AG04450 (cell line): ENCODE measurements at regions of chr7 and their contacts with region 1.

Region 1: GRCh38 chr7:31122649-31123058 is 70.5 kb downstream of the ADCYAP1R1 start:
- DNase-seq: peak; percentile 81
- H3K4me3 ChIP-seq: no peak overlapping the region
- H3K27ac ChIP-seq: no peak overlapping the region
- H3K27me3 ChIP-seq: no peaks in the 10 kb centered on the region
- CTCF ChIP-seq: peak; percentile 82

Region 2: GRCh38 chr7:30787486-30787885 is 335.2 kb before region 1 on chr7:
- CTCF ChIA-PET with region 1: interaction called, 10 read pairs
- POLR2A ChIA-PET with region 1: no interaction called
- DNase-seq: no peak
- H3K4me3 ChIP-seq: no peak overlapping the region
- H3K27ac ChIP-seq: no peak overlapping the region
- H3K27me3 ChIP-seq: no peaks in the 10 kb centered on the region
- CTCF ChIP-seq: no peak

Region 3: DNA sequence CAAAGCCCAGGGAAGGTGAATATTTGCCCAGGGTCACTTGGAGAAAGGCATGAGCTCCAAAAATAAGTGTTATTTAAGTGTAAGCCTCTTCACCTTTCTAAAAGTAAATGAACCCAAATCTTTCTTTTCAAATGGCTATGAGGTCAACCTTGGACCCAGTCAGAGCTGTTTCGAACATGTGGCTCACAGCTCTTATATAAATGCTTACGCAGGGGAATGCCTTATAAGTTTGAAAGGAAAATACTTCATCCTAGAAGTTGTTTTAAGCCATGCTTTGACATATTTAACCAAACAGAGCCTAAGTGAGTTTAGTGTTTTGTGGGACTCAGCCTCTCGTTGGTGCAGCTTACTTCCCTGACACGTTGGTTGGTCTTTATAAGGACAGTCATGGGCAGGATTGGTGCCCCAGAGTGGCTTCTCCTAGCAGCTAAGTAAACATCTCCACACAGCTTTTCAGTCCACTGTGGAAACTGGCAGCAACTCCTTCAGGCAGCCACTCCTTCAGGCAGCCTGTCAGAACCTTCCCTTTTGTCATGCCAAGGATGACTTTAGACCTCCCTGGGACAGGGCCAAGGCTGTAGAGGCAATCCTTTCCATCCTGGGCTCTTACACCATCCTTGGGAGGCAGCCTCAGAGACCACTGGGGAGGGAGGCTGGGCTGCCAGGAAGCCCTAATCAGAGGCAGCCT is 307.8 kb before region 1 on chr7:
- CTCF ChIA-PET with region 1: interaction called, 12 read pairs
- POLR2A ChIA-PET with region 1: no interaction called
- DNase-seq: no peak
- H3K4me3 ChIP-seq: no peak overlapping the region
- H3K27ac ChIP-seq: no peak overlapping the region
- H3K27me3 ChIP-seq: no peaks in the 10 kb centered on the region
- CTCF ChIP-seq: no peak

Region 4: DNA sequence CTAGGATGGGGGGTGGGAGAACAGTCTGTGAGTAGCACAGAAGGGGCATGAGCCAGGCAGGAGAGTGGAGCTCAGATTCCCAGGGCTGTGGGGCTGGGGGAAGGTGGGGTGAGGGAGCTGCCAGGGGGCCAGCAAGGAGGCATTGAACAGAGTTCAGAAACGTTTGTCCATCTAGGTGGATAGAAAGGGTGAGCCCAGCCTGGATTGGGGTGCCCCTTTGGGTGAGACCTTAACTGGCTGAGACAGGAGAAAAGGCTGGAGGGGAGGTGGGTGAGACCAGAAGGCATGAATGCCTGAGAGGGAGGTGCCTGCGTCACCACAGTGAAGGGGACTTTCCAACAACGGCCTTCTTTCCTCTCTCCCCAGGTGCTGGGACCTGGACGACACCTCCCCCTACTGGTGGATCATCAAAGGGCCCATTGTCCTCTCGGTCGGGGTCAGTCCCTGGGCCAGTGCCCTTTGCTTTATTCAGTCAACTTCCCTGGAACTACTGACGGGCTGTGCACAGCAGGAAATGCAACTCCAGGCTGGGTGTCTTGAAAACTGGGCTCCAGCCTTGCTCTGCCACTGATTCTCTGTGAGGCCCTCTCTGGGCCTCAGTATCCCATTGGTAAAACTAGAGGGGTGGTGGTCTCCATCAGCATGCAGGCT is 147.9 kb before region 1 on chr7:
- CTCF ChIA-PET with region 1: interaction called, 12 read pairs
- POLR2A ChIA-PET with region 1: no interaction called
- DNase-seq: no peak
- H3K4me3 ChIP-seq: no peak overlapping the region
- H3K27ac ChIP-seq: no peak overlapping the region
- H3K27me3 ChIP-seq: peaks cover 30% of the 10 kb centered on the region
- CTCF ChIP-seq: peak; percentile 56

Region 5: DNA sequence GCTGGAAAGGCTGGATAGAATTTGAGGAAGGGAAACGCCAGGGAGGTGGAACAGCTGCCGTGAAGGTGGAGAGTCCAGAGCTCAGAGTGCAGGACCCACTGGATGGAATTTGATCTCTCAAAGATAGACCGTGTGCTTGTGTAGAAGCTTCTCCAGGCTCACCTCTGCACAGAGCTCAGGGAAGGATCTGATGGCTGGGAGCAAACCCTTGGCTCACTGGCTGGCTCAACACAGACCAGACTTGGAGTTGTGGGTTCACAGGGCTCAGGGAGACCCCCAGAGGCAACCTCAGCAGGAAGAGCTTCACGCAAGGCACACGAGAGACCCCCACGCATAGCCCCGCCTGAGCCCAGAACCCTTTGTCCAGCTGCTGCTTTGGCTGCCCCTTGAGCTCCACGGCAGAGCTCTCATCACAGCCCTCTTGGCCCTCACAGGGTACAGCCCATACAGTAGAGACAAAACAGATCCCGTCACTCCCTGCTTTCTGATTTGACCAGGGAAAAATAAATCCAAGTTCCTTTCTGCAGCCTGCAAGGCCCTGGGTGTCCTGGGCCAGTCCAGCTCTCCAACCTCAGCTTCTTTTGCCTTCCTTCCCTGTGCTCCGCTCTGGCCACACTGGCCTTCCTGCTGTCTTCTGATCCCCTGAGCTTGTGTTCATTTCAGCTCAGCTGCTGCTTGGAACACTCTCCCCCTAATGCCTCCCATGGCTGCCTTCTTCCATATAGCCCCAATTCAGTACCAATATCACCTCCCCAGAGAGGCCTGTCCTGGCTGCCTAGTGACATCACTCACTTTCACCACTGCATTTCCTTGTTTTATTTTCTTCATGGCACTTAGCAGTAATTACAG is 132.6 kb before region 1 on chr7:
- CTCF ChIA-PET with region 1: interaction called, 338 read pairs
- POLR2A ChIA-PET with region 1: no interaction called
- DNase-seq: no peak
- H3K4me3 ChIP-seq: no peak overlapping the region
- H3K27ac ChIP-seq: no peak overlapping the region
- H3K27me3 ChIP-seq: peaks cover 3% of the 10 kb centered on the region
- CTCF ChIP-seq: no peak

Region 6: GRCh38 chr7:31134246-31135188 is 11.9 kb after region 1 on chr7:
- CTCF ChIA-PET with region 1: interaction called, 120 read pairs
- POLR2A ChIA-PET with region 1: no interaction called
- DNase-seq: peak; percentile 23
- H3K4me3 ChIP-seq: no peak overlapping the region
- H3K27ac ChIP-seq: no peak overlapping the region
- H3K27me3 ChIP-seq: no peaks in the 10 kb centered on the region
- CTCF ChIP-seq: peak; percentile 72

Region 7: DNA sequence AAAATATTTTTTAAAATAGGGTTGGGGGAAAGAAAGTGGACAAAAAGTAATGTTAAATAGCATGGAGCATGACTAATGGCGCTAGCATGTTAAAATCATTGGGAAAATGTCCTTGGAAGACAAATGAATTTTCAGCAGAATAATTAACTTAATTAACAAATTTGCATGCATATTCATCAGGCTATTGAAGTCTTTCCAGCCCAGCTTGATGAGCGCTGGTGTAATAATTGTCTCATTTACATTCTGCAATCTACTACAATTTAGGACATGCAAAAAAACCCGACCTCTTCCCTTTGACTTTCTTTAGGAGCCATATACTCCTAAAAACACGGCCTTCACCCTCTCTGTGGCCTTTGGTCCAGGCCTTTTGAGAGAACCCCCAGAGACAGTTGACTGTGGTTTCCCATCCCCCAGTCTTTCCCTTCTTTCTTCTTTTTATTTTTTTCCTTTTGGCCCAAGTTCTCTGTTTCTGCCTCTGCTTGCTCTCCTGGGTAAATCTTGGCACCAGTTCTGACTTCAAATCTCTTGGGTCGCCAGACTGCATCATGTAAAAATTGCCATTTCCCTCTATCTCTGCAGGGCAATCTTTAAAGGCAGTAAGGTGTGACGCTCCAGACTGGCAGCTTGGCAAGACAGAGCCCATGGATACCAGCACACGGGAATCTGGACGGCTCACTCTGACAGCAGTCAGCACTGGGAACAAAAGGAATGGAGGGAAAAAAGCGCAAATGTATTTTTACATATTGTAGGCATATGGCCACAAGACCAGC is 112.4 kb after region 1 on chr7:
- CTCF ChIA-PET with region 1: no interaction called
- POLR2A ChIA-PET with region 1: no interaction called
- DNase-seq: no peak
- H3K4me3 ChIP-seq: no peak overlapping the region
- H3K27ac ChIP-seq: no peak overlapping the region
- H3K27me3 ChIP-seq: no peaks in the 10 kb centered on the region
- CTCF ChIP-seq: no peak